ENCODE measurements at regions of chr22 and their contacts with region 1.

Region 1: DNA sequence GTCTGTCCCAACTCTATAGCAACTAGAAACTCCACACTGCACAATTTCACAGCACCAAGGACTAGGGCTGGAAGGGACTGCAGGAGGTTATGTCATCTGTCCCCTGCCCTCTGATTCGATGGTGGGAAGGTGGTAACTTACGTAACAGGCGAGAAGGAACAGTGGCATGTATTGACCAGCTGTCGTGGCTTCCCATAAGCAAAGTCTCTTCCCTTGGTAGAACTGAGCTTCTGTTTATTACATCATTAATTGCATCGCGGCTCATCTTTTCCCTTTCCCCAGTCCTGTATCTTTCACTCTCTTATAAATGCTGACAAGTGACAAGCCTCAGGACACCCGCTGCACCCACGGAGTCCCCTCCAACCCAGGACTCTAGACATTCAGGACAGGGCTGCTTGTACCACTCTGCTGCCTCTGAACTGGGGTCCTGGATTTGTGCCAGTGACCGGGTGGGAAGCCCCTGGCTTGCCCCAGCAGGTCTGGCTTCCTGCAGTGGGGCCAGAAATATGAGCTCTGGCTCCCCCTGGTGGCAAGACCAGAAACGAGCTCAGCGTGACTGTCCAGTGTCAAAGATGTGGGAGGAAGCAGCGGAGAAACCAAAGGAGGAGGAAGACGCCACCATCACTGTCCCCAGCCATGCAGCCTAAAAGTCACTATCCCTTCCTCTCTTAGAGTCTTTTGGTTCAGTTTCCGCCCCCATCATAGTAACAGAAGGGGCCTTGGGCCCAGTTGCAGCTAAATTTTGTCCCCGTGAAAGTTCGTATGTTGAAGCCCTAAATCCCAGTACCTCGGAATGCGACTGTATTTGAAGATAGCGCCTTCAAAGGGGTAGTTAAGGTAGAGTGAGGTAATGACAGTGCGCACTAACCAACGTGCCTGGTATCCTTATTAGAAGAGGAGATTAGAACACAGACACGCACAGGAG is 84.5 kb downstream of the ISX start:
- DNase-seq: peak; percentile 89
- ATAC-seq: peak; percentile 54
- H3K4me3 Mint-ChIP-seq: no peak overlapping the region
- H3K27ac Mint-ChIP-seq: no peak overlapping the region
- H3K4me1 Mint-ChIP-seq: peaks cover 35% of the 10 kb centered on the region
- H3K27me3 Mint-ChIP-seq: peaks cover 23% of the 10 kb centered on the region
- CTCF ChIP-seq: peak; percentile 82

Region 2: GRCh38 chr22:34414484-34415440 is 735.7 kb before region 1 on chr22:
- CTCF ChIA-PET with region 1: interaction called, 14 read pairs
- POLR2A ChIA-PET with region 1: no interaction called
- DNase-seq: peak; percentile 80
- ATAC-seq: peak; percentile 99
- H3K4me3 Mint-ChIP-seq: no peak overlapping the region
- H3K27ac Mint-ChIP-seq: no peak overlapping the region
- H3K4me1 Mint-ChIP-seq: peaks cover 9% of the 10 kb centered on the region
- H3K27me3 Mint-ChIP-seq: no peaks in the 10 kb centered on the region
- CTCF ChIP-seq: peak; percentile 83

Region 3: GRCh38 chr22:35023692-35024363 is 126.6 kb before region 1 on chr22:
- CTCF ChIA-PET with region 1: interaction called, 17 read pairs
- POLR2A ChIA-PET with region 1: no interaction called
- DNase-seq: peak; percentile 95
- ATAC-seq: peak; percentile 91
- H3K4me3 Mint-ChIP-seq: peak overlapping the region; percentile 69
- H3K27ac Mint-ChIP-seq: no peak overlapping the region; the same call in 1 of the 2 replicates
- H3K4me1 Mint-ChIP-seq: peaks cover 12% of the 10 kb centered on the region
- H3K27me3 Mint-ChIP-seq: peaks cover 15% of the 10 kb centered on the region
- CTCF ChIP-seq: peak; percentile 98

Region 4: DNA sequence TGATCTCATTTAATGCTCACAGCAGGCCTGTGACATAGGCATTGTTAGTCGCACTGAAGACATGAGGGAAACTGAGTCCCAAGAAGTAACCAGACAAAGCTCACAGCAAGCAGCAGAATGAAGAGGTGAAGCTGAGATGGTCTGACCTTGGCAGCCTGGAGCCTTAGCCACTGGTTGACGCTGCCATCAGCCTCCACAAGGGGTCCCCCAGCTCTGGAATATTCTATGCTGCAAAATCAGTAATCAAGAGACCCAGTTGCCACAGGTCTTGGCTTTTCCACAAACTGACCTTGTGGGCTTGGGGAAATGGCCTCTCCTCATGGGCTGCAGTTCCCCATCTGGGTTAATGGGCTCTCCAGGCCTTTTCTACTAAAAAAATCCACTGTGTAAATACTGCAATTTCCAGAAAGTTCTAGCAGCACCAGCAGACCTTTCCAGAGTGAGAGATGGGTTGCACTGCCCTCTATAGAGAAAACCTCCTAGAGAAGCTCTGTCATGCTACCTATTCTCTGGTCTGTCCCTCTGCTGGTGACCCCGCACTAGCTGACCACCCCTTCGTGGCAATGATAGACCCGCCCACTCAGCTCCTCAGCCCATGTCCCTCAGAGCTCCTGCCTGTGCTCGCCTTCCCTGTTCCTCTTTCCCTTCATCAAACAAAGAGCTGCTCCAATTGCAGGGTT is 107.1 kb before region 1 on chr22:
- CTCF ChIA-PET with region 1: interaction called, 94 read pairs
- POLR2A ChIA-PET with region 1: interaction called, 4 read pairs
- DNase-seq: peak; percentile 44
- ATAC-seq: peak; percentile 79
- H3K4me3 Mint-ChIP-seq: no peak overlapping the region
- H3K27ac Mint-ChIP-seq: no peak overlapping the region
- H3K4me1 Mint-ChIP-seq: peaks cover 14% of the 10 kb centered on the region
- H3K27me3 Mint-ChIP-seq: peaks cover 2% of the 10 kb centered on the region; the same call in 1 of the 2 replicates
- CTCF ChIP-seq: no peak

Region 5: GRCh38 chr22:35119494-35119893 is 31.0 kb before region 1 on chr22:
- CTCF ChIA-PET with region 1: interaction called, 11 read pairs
- POLR2A ChIA-PET with region 1: no interaction called
- DNase-seq: no peak
- ATAC-seq: no peak
- H3K4me3 Mint-ChIP-seq: no peak overlapping the region
- H3K27ac Mint-ChIP-seq: no peak overlapping the region
- H3K4me1 Mint-ChIP-seq: peaks cover 4% of the 10 kb centered on the region; the same call in 1 of the 2 replicates
- H3K27me3 Mint-ChIP-seq: no peaks in the 10 kb centered on the region; the same call in 1 of the 2 replicates
- CTCF ChIP-seq: no peak